CD4-positive, alpha-beta memory T cell (primary cell): ENCODE measurements at regions of chr19 and their contacts with region 1.

Region 1: GRCh38 chr19:20237761-20238623 is 71.0 kb downstream of the ZNF486 start:
- DNase-seq: peak; percentile 85 to 89 (median 88)
- H3K4me3 ChIP-seq: peak overlapping the region; percentile 78 to 95
- H3K4me3 Mint-ChIP-seq: peak overlapping the region; percentile 94 to 99 (median 98)
- H3K27ac ChIP-seq: peak overlapping the region; percentile 54
- H3K27ac Mint-ChIP-seq: peak overlapping the region; percentile 79 to 95 (median 92)
- H3K4me1 ChIP-seq: no peaks in the 10 kb centered on the region
- H3K4me1 Mint-ChIP-seq: peaks cover 6 to 13% (median 11%) of the 10 kb centered on the region in 4 donors
- H3K27me3 ChIP-seq: no peaks in the 10 kb centered on the region
- H3K27me3 Mint-ChIP-seq: no peaks in the 10 kb centered on the region

Region 2: DNA sequence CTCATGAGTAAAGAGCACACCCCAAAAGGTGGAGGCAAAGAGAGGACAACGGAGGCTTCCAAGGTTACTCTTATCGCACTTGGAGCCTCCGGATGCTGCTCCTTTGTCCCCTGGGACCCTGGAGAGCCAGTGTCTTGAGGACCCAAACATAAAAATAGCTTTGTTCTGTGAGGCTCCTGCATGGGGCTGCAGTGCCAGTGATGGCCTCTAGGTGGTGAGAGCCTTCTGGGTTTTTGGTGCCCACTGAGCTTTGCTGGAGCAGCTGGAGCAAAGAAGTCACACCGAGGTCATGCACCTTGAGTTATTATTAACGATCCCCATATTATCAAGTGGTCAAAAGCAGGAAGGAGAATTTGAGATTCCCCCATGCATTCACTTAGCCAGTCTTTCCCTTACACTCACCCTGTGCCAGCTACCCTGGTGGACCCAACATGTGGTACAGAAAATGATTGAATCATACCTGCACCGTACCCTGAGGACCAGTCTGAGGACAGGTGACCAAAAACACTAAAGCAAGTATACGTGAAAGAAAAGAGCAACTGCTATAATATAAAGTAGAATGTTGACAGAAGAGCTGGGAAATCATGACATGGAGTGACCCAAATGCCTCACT is 240.2 kb before region 1 on chr19:
- CTCF ChIA-PET with region 1: interaction called, 23 read pairs
- POLR2A ChIA-PET with region 1: interaction called, 3 read pairs
- intact Hi-C with region 1: no loop called
- DNase-seq: peak; percentile 18 to 43 (median 38)
- H3K4me3 ChIP-seq: no peak overlapping the region
- H3K4me3 Mint-ChIP-seq: no peak overlapping the region
- H3K27ac ChIP-seq: no peak overlapping the region
- H3K27ac Mint-ChIP-seq: no peak overlapping the region
- H3K4me1 ChIP-seq: no peaks in the 10 kb centered on the region
- H3K4me1 Mint-ChIP-seq: no peaks in the 10 kb centered on the region
- H3K27me3 ChIP-seq: no peaks in the 10 kb centered on the region
- H3K27me3 Mint-ChIP-seq: peaks cover 0 to 1% of the 10 kb centered on the region in 2 donors

Region 3: GRCh38 chr19:21308773-21309172 is 1070.8 kb after region 1 on chr19:
- CTCF ChIA-PET with region 1: no interaction called
- POLR2A ChIA-PET with region 1: no interaction called
- intact Hi-C with region 1: no loop called
- DNase-seq: no peak
- H3K4me3 ChIP-seq: no peak overlapping the region
- H3K4me3 Mint-ChIP-seq: peak overlapping the region in 1 of 8 donors; percentile 56
- H3K27ac ChIP-seq: no peak overlapping the region
- H3K27ac Mint-ChIP-seq: no peak overlapping the region
- H3K4me1 ChIP-seq: no peaks in the 10 kb centered on the region
- H3K4me1 Mint-ChIP-seq: peaks cover 8 to 19% (median 14%) of the 10 kb centered on the region in 4 donors
- H3K27me3 ChIP-seq: no peaks in the 10 kb centered on the region
- H3K27me3 Mint-ChIP-seq: no peaks in the 10 kb centered on the region